Activated T-helper 2 cell treated with anti-CD3 and anti-CD28 coated beads, Interferon-gamma antibody, Interleukin-2, Interleukin-4, amounts not matched to agents 10 μg/mL and 5 μg/mL and 100 μg/mL, durations not matched to agents 14 hours and 24 hours and 36 hours (primary cell): ENCODE measurements at regions of chr9 and their contacts with region 1.

Region 1: GRCh38 chr9:111992523-111992922 is 95.9 kb downstream of the UGCG start:
- DNase-seq: no peak
- H3K4me3 Mint-ChIP-seq: no peak overlapping the region
- H3K27ac Mint-ChIP-seq: no peak overlapping the region
- H3K4me1 Mint-ChIP-seq: peaks cover 18% of the 10 kb centered on the region
- H3K27me3 Mint-ChIP-seq: peaks cover 9% of the 10 kb centered on the region

Region 2: GRCh38 chr9:111870774-111871498 is 121.6 kb before region 1 on chr9:
- intact Hi-C with region 1: loop called (anchors 2 kb)
- DNase-seq: peak; percentile 11
- H3K4me3 Mint-ChIP-seq: no peak overlapping the region
- H3K27ac Mint-ChIP-seq: no peak overlapping the region
- H3K4me1 Mint-ChIP-seq: peaks cover 18% of the 10 kb centered on the region
- H3K27me3 Mint-ChIP-seq: peaks cover 50% of the 10 kb centered on the region

Region 3: GRCh38 chr9:111896353-111896958 is 96.1 kb before region 1 on chr9 and contains the start of gene UGCG:
- intact Hi-C with region 1: loop called (anchors 2 kb)
- DNase-seq: peak; percentile 85
- H3K4me3 Mint-ChIP-seq: peak within 1 kb of the TSS; percentile 84
- H3K27ac Mint-ChIP-seq: peak within 1 kb of the TSS; percentile 83
- H3K4me1 Mint-ChIP-seq: peaks cover 9% of the 10 kb centered on the region
- H3K27me3 Mint-ChIP-seq: peaks cover 3% of the 10 kb centered on the region
- total RNA-seq, gene UGCG: 14.4 and 16.6 TPM in 2 replicates

Region 4: GRCh38 chr9:111937781-111938426 is 54.6 kb before region 1 on chr9:
- intact Hi-C with region 1: loop called (anchors 2 kb)
- DNase-seq: peak; percentile 16
- H3K4me3 Mint-ChIP-seq: peak overlapping the region; percentile 41
- H3K27ac Mint-ChIP-seq: peak overlapping the region; percentile 85
- H3K4me1 Mint-ChIP-seq: peaks cover 23% of the 10 kb centered on the region
- H3K27me3 Mint-ChIP-seq: no peaks in the 10 kb centered on the region

Region 5: DNA sequence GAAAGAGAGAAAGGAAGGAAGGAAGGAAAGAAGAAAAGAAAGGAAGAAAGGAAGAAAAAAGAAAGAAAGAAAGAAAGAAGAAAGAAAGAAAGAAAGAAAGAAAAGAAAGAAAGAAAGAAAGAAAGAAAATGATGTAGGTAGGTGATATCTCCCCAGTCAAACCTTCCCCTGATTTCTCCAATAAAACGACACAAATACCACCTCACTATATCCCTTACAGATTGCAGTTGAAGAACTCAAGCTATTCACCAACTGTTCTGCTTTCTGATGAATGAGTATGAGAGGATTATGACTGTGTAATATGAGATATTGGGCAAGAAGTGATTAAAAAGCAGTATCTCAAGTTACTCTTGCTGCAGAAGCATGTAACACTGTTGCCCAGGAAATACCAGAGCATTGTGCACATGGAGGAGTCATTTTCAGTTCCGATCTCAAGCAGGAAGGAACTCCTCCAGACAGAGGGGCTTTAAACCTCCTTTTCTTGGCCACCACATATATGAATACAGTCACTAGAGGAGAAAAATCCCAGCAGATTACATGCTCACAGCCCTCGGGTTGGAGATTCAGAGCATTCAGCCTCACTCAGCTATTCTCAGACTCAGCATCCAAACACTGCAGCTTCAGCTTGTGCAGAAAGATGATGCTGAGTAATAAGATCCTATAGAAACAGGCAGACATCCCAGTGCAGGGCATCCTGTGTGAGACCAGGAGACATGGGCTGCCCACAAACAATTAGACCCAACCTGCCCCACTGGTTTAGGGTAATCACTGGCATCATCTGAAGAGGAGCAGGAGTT is 34.5 kb before region 1 on chr9:
- intact Hi-C with region 1: loop called (anchors 2 kb)
- DNase-seq: peak; percentile 9
- H3K4me3 Mint-ChIP-seq: peak overlapping the region; percentile 20
- H3K27ac Mint-ChIP-seq: no peak overlapping the region
- H3K4me1 Mint-ChIP-seq: peaks cover 15% of the 10 kb centered on the region
- H3K27me3 Mint-ChIP-seq: peaks cover 44% of the 10 kb centered on the region

Region 6: DNA sequence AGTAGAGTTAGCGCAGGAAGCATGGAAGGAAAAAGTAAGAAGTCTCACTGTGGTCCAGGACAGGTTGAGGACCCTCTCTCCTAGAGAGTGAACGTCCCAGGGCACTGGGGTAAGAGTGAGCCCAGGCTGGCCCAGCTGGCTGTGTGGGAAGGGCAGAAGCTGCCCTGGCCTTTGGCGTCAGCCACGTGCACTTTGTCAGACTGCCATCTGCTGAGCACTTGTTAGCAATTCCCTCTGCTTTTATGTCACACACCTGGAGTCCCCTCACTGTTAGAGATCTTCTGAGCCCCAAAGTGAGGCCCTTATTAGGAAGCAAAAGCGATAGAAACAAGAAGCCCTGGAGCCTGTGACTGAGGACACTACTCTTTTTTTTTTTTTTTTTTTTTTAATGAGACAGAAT is 16.8 kb before region 1 on chr9:
- intact Hi-C with region 1: no loop called
- DNase-seq: no peak
- H3K4me3 Mint-ChIP-seq: no peak overlapping the region
- H3K27ac Mint-ChIP-seq: no peak overlapping the region
- H3K4me1 Mint-ChIP-seq: no peaks in the 10 kb centered on the region
- H3K27me3 Mint-ChIP-seq: peaks cover 23% of the 10 kb centered on the region

Region 7: GRCh38 chr9:112012026-112012902 is 19.7 kb after region 1 on chr9:
- intact Hi-C with region 1: loop called (anchors 1 kb)
- DNase-seq: no peak
- H3K4me3 Mint-ChIP-seq: no peak overlapping the region
- H3K27ac Mint-ChIP-seq: no peak overlapping the region
- H3K4me1 Mint-ChIP-seq: peaks cover 22% of the 10 kb centered on the region
- H3K27me3 Mint-ChIP-seq: peaks cover 49% of the 10 kb centered on the region

Region 8: DNA sequence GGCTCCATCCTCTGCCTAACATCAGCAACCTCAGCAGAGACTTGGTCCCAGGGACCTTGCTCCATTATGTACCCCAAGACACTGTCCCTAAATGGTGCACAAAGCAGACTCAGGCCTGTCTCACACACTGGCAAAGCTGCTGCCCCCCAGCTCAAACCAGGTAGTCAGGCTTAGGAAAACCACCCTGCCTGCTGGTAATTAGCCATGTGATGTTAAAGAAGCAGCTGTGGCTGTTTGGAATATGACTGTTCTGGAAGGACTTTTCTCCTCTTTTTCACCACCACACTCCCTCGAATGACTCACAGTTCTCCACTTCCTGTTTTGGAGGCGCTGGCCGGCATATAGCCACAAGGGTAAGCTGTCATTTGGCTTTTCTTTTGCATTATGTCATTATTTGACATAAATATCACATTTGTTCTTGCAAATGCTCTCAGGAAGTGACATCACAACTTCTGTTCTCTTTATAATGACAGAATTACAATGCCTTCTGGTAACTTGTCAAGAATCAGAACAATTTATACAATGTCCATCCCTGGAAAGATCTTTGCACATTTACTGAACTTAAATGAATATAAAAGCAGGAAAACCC is 68.7 kb after region 1 on chr9:
- intact Hi-C with region 1: loop called (anchors 2 kb)
- DNase-seq: peak; percentile 18
- H3K4me3 Mint-ChIP-seq: no peak overlapping the region
- H3K27ac Mint-ChIP-seq: no peak overlapping the region
- H3K4me1 Mint-ChIP-seq: peaks cover 17% of the 10 kb centered on the region
- H3K27me3 Mint-ChIP-seq: no peaks in the 10 kb centered on the region